ENCODE measurements at regions of chr4 and their contacts with region 1.

Region 1: DNA sequence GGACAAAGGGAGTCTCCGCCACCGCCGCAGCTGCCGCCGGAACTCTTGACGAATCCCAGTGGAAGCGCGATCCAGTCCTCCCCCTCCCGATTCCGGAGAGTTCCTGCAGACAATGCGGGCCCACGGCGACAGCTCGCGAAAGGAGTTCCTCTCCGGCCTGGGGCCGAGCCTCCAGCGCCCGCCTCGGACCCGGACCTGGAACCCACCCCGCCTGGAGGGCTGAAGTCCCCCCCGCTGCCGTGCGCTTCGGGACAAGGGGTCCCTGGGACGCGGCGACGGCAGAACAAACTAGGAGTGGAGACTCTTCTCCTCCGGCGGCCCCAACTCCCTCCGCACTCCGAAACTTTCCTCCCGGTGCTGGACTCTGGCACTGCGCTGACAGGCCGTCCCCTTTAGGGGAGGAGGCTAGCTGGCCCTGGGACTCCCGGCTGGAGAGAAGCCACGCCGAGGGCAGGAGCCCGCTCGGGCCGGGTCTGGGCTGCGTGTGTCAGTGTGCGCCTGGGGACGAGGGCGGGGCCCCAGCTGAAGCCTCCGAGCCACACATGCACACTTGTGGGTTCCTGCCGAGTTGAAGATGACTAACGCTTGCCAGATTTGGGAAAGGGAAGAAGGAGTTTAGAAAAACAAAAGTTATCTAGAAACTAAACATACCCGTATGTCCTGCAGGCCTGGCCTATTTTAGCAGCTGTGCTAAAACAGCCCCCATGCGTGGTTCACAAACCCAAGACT is at the start of gene ANTXR2:
- DNase-seq: peak; percentile 73
- ATAC-seq: peak; percentile 78
- H3K4me3 Mint-ChIP-seq: peak within 1 kb of the TSS; percentile 94
- H3K27ac Mint-ChIP-seq: peak within 1 kb of the TSS; percentile 97
- H3K4me1 Mint-ChIP-seq: peaks cover 56% of the 10 kb centered on the region
- H3K27me3 Mint-ChIP-seq: no peaks in the 10 kb centered on the region
- CTCF ChIP-seq: no peak
- total RNA-seq, gene ANTXR2: 14.2 and 19.6 TPM in 2 replicates

Region 2: DNA sequence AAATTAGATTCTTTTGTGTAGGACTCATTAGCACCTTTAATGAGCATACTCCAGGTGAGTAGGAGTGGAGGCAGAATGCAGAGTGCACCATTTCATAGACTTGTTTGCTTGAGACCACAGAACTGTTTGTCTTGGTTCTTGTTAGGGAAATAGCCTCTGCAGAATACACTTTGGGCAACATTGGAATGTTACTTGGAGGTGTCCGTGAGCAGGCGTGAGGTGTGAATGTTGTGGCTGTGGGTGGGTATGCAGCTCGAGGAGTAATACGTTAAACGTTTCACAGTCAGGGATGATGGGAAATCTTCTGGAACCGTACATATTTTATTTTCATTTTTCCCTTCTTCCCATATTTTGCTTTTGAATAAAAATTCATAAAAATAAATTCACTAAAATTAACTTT is 1165.3 kb before region 1 on chr4:
- CTCF ChIA-PET with region 1: no interaction called
- POLR2A ChIA-PET with region 1: no interaction called
- intact Hi-C with region 1: no loop called
- DNase-seq: no peak
- ATAC-seq: no peak
- H3K4me3 Mint-ChIP-seq: no peak overlapping the region
- H3K27ac Mint-ChIP-seq: no peak overlapping the region
- H3K4me1 Mint-ChIP-seq: peaks cover 1% of the 10 kb centered on the region
- H3K27me3 Mint-ChIP-seq: no peaks in the 10 kb centered on the region
- CTCF ChIP-seq: no peak

Region 3: DNA sequence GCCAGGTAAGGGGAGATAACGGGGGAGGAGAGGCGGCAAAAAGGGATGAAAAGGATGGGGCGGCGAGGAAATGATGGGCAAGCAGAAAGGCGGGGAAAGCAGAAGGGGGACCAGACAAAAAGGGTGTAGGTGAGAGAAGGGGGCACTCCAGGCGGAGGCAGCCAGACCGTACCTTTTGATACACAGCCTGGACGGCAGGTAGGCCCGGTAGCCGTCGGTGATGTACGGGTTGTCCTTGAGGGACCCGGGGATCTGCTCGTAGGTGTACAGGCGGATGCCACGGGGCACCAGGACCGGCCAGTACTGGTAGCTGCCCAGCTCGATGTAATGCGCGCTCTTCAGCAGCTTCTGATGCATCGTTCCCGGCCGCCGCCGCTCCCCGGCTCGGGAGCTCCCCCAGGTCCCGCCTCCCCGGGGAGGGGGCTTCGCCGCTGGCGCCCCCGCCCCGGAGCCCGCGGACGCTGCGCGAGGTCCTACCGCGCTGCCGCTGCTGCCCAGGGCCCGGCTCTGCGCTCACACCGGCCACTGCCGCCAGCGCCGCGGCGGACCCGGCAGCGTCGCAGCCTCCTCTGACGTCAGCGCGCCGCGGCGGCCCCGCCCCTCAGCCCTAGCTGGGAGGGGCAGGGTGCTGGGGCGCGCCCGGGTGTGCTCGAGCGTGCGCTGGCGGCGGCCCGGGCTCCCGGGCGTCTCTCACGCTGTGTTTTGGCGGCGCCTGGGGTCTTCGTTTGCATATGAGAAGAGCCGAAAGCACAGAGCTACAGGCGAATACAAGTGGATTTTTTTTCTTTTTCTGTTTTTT is 1133.8 kb before region 1 on chr4 and contains the start of gene PAQR3:
- CTCF ChIA-PET with region 1: no interaction called
- POLR2A ChIA-PET with region 1: no interaction called
- intact Hi-C with region 1: loop called (anchors 5 kb)
- DNase-seq: peak; percentile 90
- ATAC-seq: peak; percentile 98
- H3K4me3 Mint-ChIP-seq: peak within 1 kb of the TSS; percentile 96
- H3K27ac Mint-ChIP-seq: peak within 1 kb of the TSS; percentile 84
- H3K4me1 Mint-ChIP-seq: peaks cover 20% of the 10 kb centered on the region
- H3K27me3 Mint-ChIP-seq: no peaks in the 10 kb centered on the region
- CTCF ChIP-seq: no peak
- total RNA-seq, gene PAQR3: 10.2 and 10.3 TPM in 2 replicates

Region 4: DNA sequence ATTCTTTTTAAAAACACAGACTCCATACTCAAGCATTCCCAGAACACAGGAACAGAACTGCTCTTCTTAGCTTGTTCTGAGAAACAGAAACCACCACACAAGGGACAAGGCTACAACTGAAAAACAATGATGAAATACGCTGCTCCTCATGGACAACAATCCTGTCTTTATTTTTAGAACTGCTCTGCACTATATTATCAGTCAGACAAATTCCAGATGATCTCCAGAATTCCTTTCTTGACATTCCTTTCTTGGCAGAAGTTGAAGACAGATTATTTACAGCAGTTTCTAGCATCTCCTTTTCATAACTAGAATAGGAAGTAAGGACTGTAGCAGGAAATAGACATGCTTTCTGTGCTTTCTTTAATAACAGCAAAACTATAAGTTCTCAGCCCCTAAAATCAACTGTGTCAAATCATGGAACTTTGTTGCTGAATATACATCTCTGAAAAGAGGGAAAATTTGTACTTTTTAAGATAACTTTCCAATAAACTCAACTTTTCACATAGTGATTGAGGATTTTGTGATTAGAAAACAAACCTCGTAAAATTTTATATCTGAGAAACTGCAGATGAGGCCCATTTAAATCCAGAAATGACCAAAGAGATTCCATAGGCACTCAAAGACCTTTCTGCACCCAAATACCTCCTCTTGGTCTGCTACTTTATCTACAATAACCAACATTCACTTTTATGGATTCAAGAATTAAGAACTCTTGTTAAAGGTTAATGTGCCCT is 35.8 kb before region 1 on chr4:
- CTCF ChIA-PET with region 1: no interaction called
- POLR2A ChIA-PET with region 1: interaction called, 3 read pairs
- intact Hi-C with region 1: loop called (anchors 2 kb)
- DNase-seq: no peak
- ATAC-seq: no peak
- H3K4me3 Mint-ChIP-seq: peak overlapping the region; percentile 41
- H3K27ac Mint-ChIP-seq: peak overlapping the region; percentile 84
- H3K4me1 Mint-ChIP-seq: peaks cover 21% of the 10 kb centered on the region
- H3K27me3 Mint-ChIP-seq: no peaks in the 10 kb centered on the region
- CTCF ChIP-seq: no peak

Region 5: GRCh38 chr4:80058740-80059139 is 14.2 kb before region 1 on chr4:
- CTCF ChIA-PET with region 1: interaction called, 7 read pairs
- POLR2A ChIA-PET with region 1: interaction called, 36 read pairs
- intact Hi-C with region 1: loop called (anchors 1 kb)
- DNase-seq: no peak
- ATAC-seq: peak; percentile 89
- H3K4me3 Mint-ChIP-seq: peak overlapping the region; percentile 79
- H3K27ac Mint-ChIP-seq: peak overlapping the region; percentile 99
- H3K4me1 Mint-ChIP-seq: peaks cover 30% of the 10 kb centered on the region
- H3K27me3 Mint-ChIP-seq: no peaks in the 10 kb centered on the region
- CTCF ChIP-seq: no peak

Region 6: DNA sequence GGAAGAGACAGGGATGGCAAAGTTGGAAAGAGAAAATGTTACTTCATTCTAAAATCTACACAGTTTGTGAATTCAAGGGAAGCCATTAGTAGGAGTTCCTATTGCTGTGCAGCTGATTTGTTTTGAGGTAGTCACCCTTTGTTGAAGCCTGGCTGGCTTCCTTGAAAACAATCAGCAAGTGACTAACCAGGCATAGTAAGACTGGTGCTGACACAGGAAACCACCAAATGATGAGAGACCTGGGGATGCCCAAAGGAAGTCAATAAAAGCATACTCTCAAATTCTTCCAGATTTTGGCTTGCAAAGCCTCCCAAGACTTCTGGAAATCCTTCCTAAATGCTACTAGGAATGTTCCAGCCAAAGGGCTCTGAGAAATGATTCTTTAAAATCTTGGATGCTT is 100.5 kb after region 1 on chr4:
- CTCF ChIA-PET with region 1: interaction called, 7 read pairs
- POLR2A ChIA-PET with region 1: interaction called, 9 read pairs
- intact Hi-C with region 1: loop called (anchors 1 kb)
- DNase-seq: no peak
- ATAC-seq: peak; percentile 91
- H3K4me3 Mint-ChIP-seq: peak overlapping the region; percentile 70
- H3K27ac Mint-ChIP-seq: peak overlapping the region; percentile 96
- H3K4me1 Mint-ChIP-seq: peaks cover 62% of the 10 kb centered on the region
- H3K27me3 Mint-ChIP-seq: no peaks in the 10 kb centered on the region
- CTCF ChIP-seq: no peak

Region 7: DNA sequence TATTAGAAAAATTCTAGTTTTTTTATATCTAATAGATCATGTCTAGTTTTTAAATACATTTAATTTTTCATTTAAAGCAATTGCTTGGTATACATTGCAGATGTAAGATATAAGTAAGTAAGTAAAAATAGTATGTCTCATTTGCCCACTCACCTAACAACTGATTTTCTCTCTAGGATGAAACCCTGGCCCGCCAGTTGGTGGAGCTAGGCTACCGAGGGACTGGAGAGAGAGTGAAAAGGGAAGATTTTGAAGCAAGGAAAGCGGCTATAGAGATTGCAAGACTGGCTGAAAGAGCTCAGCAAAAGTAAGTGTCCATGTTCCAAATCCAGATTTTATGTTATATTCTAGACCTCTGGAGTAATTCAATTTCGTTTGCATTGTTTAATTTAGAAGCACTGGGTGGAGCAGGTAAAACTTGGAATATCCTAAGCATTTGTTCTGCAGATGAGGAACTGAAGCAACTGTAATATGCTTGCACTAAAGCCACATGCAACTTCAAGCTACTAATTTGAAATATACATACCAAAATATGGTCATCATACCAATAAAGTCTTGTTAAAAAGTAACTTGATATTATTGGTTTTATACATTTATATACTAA is 289.8 kb after region 1 on chr4:
- CTCF ChIA-PET with region 1: no interaction called
- POLR2A ChIA-PET with region 1: no interaction called
- intact Hi-C with region 1: no loop called
- DNase-seq: no peak
- ATAC-seq: peak; percentile 37
- H3K4me3 Mint-ChIP-seq: no peak overlapping the region
- H3K27ac Mint-ChIP-seq: no peak overlapping the region
- H3K4me1 Mint-ChIP-seq: peaks cover 4% of the 10 kb centered on the region
- H3K27me3 Mint-ChIP-seq: peaks cover 30% of the 10 kb centered on the region
- CTCF ChIP-seq: no peak

Region 8: DNA sequence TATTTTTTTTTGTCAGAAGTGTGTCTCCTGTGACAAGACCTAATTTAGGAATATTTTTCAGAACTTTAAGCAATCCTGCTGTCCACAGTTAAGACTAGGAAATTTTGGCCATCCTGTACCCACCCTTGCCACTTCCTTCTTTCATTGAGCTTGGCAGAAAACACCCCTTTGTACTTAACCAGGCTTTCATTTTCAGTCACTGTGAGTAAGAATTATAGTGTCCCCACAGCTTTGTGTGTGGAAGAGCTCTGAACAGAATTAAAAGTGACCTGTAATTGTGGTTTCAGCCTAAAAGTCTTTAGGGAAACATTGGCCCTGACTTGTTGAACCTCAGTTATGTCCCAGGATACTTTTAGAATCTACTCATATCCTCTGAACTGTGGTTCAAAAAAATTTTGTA is 803.9 kb after region 1 on chr4:
- CTCF ChIA-PET with region 1: no interaction called
- POLR2A ChIA-PET with region 1: no interaction called
- intact Hi-C with region 1: loop called (anchors 10 kb)
- DNase-seq: no peak
- ATAC-seq: peak; percentile 50
- H3K4me3 Mint-ChIP-seq: peak overlapping the region; percentile 51
- H3K27ac Mint-ChIP-seq: peak overlapping the region; percentile 88
- H3K4me1 Mint-ChIP-seq: peaks cover 28% of the 10 kb centered on the region
- H3K27me3 Mint-ChIP-seq: no peaks in the 10 kb centered on the region
- CTCF ChIP-seq: no peak